Right ventricle myocardium inferior (tissue), 1 donor: ENCODE measurements at regions of chr22 and their contacts with region 1.

Region 1: DNA sequence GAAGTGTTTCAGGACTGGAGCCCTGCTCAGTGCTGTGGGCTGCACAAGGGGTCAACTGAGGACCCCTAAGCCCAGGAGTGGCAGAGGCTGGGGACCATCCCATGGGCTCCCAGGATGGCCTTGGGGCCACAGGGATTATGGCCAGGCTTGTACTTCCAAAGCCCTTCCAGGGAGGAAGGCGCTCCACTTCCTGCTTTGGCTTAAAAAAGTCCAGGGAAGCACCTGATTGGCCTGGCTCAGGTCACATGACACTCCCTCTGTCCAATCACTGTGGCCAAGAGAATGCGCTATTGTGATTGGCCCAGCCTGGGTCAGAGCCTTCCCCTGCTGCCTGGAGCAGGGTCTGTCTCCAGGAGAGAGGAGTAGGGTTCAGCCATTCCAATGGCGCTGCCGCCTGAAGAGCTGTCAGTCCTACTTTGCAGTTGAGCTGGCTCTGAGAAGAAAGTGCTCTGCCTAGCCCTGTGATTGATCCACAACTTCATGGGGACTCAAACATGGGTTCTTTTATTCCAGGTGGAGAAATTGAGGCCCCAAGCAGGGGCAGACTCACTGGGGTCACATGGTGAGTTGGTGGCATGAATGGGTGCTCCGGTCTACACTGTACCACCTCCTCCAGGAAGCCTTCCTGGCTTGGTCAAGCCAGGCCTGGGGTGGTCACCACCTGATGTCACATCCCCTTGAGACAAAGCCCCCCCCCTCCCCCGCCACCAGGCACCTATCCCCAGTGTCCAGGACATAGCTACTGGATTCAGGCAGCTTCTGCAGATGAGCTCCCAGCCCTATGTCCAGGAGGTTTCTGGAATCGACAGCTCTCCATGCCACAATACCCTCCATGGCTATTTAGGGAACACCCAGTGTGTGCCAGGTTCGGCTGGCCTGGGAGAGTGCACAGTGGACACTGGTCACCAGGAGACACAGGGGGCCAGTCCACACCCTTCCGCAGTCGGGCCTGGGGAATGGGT is 48.2 kb downstream of the RTN4R start:
- DNase-seq: no peak
- ATAC-seq: no peak

Region 2: DNA sequence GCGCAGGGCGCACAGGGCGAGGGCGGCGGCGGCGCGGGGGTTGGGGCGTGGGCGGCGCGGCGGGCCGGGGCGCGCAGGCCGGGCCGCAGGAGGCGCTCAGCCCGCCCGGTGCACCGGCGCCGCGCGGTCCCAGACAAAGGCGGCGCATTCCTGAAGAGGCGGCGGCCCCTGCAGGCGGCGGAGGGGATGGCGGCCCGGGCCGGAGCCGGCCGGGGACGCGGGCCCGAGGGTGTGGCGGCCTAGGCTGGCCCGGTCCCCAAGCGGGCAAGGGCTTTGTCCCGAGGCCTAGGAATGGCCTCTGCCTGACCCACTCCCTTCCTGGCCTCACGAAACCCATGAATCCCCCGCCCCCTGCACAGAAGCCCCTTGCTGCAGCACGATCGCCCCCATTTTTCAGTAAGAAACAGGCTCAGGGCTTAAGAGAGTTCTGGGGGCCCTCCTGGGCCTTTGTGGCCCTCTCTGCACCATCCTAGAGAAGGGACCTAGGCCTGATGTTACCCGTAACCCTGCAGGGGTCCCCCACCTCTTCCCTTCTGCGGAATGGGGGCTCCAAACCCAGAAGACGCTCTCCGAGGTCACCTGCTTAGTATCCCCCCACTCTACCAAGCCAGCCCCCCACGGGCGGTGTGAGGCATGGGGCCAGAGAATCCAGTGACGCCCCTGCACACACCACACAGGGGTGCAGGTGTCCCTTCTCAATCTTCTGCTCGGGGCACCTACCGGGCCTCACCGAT is 48.5 kb after region 1 on chr22 and contains the start of gene RTN4R:
- intact Hi-C with region 1: loop called (anchors 5 kb)
- DNase-seq: no peak
- ATAC-seq: peak; percentile 86
- total RNA-seq, gene RTN4R: 1.2 TPM